Activated CD4-positive, alpha-beta T cell treated with anti-CD3 and anti-CD28 coated beads for 36 hours (primary cell): ENCODE measurements at regions of chr13 and their contacts with region 1.

Region 1: GRCh38 chr13:45332036-45332830 is 8.8 kb downstream of the TPT1 start:
- DNase-seq: no peak
- ATAC-seq: no peak
- H3K4me3 Mint-ChIP-seq: no peak overlapping the region
- H3K27ac Mint-ChIP-seq: peak overlapping the region; percentile 55
- H3K4me1 Mint-ChIP-seq: peaks cover 90% of the 10 kb centered on the region
- H3K27me3 Mint-ChIP-seq: no peaks in the 10 kb centered on the region

Region 2: GRCh38 chr13:45349438-45349837 is 17.2 kb after region 1 on chr13:
- CTCF ChIA-PET with region 1: no interaction called
- POLR2A ChIA-PET with region 1: no interaction called
- intact Hi-C with region 1: no loop called
- DNase-seq: no peak
- ATAC-seq: no peak
- H3K4me3 Mint-ChIP-seq: no peak overlapping the region
- H3K27ac Mint-ChIP-seq: no peak overlapping the region
- H3K4me1 Mint-ChIP-seq: peaks cover 4% of the 10 kb centered on the region
- H3K27me3 Mint-ChIP-seq: no peaks in the 10 kb centered on the region

Region 3: DNA sequence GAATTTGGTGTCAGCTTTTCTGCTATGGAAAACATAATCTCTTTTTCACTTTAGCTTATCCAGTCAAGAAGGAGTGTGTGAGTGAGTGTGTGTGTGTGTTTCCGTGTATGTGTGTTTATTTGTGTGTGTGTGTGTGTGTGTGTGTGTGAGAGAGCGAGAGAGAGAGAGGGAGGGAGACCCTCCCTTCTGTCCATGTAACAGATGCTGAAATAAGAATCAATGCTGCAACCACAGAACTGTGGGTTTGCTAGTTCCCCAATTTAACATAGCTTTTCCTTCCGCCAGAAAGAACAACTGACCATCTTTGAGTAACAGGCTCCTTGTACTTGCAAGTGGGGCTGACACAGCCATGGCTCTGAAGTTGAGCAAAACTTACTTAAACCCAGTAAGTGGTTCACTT is 844.5 kb after region 1 on chr13:
- CTCF ChIA-PET with region 1: no interaction called
- POLR2A ChIA-PET with region 1: no interaction called
- intact Hi-C with region 1: loop called in 1 of 2 experiments (anchors 10 kb)
- DNase-seq: no peak
- ATAC-seq: no peak
- H3K4me3 Mint-ChIP-seq: peak overlapping the region; percentile 97
- H3K27ac Mint-ChIP-seq: peak overlapping the region; percentile 92
- H3K4me1 Mint-ChIP-seq: peaks cover 65% of the 10 kb centered on the region
- H3K27me3 Mint-ChIP-seq: no peaks in the 10 kb centered on the region